ENCODE measurements at regions of chr5 and their contacts with region 1.

Region 1: GRCh38 chr5:124741711-124742496 is 4.5 kb downstream of the ZNF608 start:
- DNase-seq: peak; percentile 83
- ATAC-seq: peak; percentile 54
- H3K4me3 ChIP-seq: 0 out of 2 replicates have a peak overlapping the region, but pooled peaks have one; percentile 18
- H3K27ac ChIP-seq: no peak overlapping the region; the same call in 1 of the 2 replicates
- H3K4me1 ChIP-seq: peaks cover 3% of the 10 kb centered on the region
- H3K27me3 ChIP-seq: no peaks in the 10 kb centered on the region
- CTCF ChIP-seq: no peak
- POLR2A ChIP-seq: no peak
- RAD21 ChIP-seq: no peak

Region 2: GRCh38 chr5:123937230-123937629 is 804.7 kb before region 1 on chr5:
- CTCF ChIA-PET with region 1: no interaction called
- POLR2A ChIA-PET with region 1: no interaction called
- dilution Hi-C with region 1: no loop called
- in situ Hi-C with region 1: no loop called
- intact Hi-C with region 1: loop called (anchors 5 kb)
- DNase-seq: peak; percentile 67
- ATAC-seq: no peak
- H3K4me3 ChIP-seq: no peak overlapping the region
- H3K27ac ChIP-seq: no peak overlapping the region
- H3K4me1 ChIP-seq: no peaks in the 10 kb centered on the region
- H3K27me3 ChIP-seq: no peaks in the 10 kb centered on the region
- CTCF ChIP-seq: peak; percentile 62
- POLR2A ChIP-seq: no peak
- RAD21 ChIP-seq: peak; percentile 81

Region 3: DNA sequence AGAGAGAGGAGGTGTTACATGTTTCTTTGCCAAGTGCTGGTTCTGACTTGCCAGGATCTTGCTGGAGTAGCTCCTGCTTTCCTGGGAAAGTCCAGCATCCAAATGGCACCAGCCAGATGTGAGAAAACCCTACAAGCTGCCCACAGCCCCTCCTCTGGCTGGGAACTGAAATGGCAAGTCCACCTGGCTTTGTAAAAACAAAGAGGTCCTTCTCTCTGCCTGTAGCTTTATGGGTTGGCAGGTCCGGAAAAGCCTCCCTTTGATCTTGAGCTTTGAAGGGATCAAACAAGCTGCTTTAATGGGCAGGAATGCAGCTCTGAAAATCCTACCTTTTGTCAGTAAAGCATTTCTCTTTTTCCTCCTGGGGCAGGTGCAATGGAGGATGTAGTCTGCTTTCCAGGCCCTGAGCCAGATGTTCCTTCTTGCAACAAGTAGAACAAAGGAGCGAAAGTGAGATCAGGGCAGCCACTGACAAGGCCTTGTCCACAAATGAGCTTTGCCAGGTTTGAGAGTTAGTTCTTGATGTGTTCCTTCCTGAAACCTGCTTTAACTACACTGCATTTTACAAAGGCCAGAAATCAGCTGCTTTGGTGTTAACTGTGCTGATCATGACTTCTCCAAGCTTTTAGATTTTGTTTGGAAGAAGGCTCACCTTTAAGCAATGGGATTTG is 452.1 kb before region 1 on chr5:
- CTCF ChIA-PET with region 1: no interaction called
- POLR2A ChIA-PET with region 1: interaction called, 14 read pairs
- dilution Hi-C with region 1: no loop called
- in situ Hi-C with region 1: no loop called
- intact Hi-C with region 1: no loop called
- DNase-seq: no peak
- ATAC-seq: no peak
- H3K4me3 ChIP-seq: no peak overlapping the region
- H3K27ac ChIP-seq: no peak overlapping the region
- H3K4me1 ChIP-seq: no peaks in the 10 kb centered on the region
- H3K27me3 ChIP-seq: peaks cover 5% of the 10 kb centered on the region
- CTCF ChIP-seq: no peak
- POLR2A ChIP-seq: no peak
- RAD21 ChIP-seq: no peak

Region 4: DNA sequence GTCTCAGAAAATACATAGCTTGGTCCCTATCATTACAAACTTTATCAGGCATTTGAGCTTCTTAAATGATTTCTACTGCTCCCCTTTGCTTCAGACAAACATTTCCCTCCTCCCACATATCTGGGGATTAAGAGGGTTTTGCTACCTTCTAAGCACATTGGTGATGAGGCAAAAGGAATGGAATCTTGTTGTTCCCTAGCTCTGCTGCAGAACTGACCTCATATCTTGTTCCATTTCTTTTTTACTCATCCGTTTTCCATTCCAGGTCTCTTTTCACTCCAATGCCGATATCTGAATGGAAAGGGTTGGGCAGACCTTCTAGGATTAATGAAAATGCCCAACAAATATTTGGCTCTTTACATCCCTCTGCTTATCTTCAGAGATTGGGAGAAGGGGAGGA is 440.1 kb before region 1 on chr5:
- CTCF ChIA-PET with region 1: no interaction called
- POLR2A ChIA-PET with region 1: no interaction called
- dilution Hi-C with region 1: no loop called
- in situ Hi-C with region 1: no loop called
- intact Hi-C with region 1: loop called (anchors 5 kb)
- DNase-seq: peak; percentile 72
- ATAC-seq: peak; percentile 78
- H3K4me3 ChIP-seq: no peak overlapping the region
- H3K27ac ChIP-seq: no peak overlapping the region
- H3K4me1 ChIP-seq: peaks cover 14% of the 10 kb centered on the region
- H3K27me3 ChIP-seq: no peaks in the 10 kb centered on the region
- CTCF ChIP-seq: no peak
- POLR2A ChIP-seq: no peak
- RAD21 ChIP-seq: no peak

Region 5: DNA sequence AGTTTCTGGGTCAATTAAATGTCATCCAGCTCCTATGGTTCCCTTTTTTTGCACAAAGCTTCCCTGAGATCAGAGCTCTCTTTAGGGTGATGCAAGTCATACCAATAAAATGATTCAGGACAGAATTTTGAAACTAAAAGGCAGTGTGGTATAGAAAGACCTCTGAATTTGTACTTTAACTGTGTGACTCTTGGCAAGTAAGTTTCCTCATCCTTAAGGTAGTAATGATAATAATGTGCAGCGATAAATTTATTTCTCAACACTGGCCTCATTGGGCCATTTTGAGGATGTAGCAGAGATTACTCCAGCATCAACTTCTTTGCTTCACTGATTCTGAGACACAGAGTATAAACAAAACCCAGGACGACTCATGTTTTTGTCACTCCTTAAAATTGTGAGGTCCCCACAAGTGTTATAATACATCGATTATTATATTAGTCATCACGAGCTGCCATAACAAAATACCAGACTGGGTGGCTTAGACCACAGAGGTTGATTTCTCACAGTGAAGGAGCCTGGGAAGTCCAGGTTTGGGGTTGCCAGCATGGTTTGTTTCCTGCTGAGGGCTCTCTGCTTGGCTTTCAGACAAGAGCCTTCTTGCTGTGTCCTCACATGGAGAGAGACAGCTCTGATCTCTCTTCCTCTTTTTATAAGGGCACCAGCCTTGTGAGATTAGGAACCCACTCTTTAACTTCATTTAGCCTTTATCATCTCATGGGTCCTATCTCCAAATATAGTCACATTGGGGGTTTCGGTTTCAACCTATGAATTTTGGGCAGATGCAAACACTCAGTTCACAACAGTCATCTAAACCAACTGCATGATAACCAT is 288.5 kb before region 1 on chr5:
- CTCF ChIA-PET with region 1: no interaction called
- POLR2A ChIA-PET with region 1: no interaction called
- dilution Hi-C with region 1: no loop called
- in situ Hi-C with region 1: loop called (anchors 10 kb)
- intact Hi-C with region 1: loop called (anchors 5 kb)
- DNase-seq: peak; percentile 89
- ATAC-seq: peak; percentile 60
- H3K4me3 ChIP-seq: no peak overlapping the region
- H3K27ac ChIP-seq: 0 out of 2 replicates have a peak overlapping the region, but pooled peaks have one; percentile 34
- H3K4me1 ChIP-seq: peaks cover 16% of the 10 kb centered on the region
- H3K27me3 ChIP-seq: peaks cover 5% of the 10 kb centered on the region
- CTCF ChIP-seq: no peak
- POLR2A ChIP-seq: no peak
- RAD21 ChIP-seq: no peak